MCF 10A (cell line): ENCODE measurements at regions of chr5 and their contacts with region 1.

Region 1: GRCh38 chr5:167653645-167654106 is 637.8 kb upstream of the WWC1 start:
- DNase-seq: peak; percentile 69
- H3K4me3 Mint-ChIP-seq: no peak overlapping the region
- H3K27ac Mint-ChIP-seq: peak overlapping the region; percentile 20
- H3K4me1 Mint-ChIP-seq: peaks cover 27% of the 10 kb centered on the region
- H3K27me3 Mint-ChIP-seq: no peaks in the 10 kb centered on the region
- CTCF ChIP-seq: no peak

Region 2: DNA sequence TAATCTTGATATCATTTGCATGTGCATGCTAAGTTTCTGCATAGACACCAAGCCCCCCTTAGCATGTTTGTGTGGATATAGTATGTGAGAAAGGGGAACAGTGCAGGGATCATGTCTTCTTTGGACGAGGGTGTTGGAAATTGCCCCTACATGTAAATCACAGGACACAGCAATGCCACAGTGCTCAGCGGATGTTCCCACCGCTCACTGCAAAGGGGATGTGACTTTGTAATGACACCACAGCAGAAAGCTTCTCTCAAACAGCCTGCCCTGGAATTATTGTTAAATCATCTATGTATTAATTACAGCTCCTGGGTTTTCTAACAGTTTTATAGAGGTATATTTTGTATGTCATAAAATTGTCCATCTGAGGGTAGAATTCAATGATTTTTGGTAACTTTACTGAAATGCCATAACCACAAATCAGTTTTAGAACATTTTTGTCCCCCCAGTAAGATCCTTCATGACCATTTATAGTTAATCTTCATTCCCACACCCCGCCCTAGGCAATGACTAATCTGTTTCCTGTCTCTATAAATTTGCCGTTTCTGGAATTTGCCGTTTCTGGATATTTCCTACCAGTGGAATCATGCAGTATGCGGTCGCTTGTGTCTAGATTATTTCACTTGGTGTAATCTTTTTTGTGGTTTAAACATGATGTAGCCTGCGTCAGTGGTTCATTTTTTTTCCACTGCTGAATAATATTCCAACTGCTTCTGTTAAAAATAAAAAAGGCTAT is 10.7 kb before region 1 on chr5:
- CTCF ChIA-PET with region 1: interaction called, 4 read pairs
- POLR2A ChIA-PET with region 1: interaction called, 27 read pairs
- intact Hi-C with region 1: no loop called
- DNase-seq: peak; percentile 86
- H3K4me3 Mint-ChIP-seq: no peak overlapping the region
- H3K27ac Mint-ChIP-seq: peak overlapping the region; percentile 70
- H3K4me1 Mint-ChIP-seq: peaks cover 43% of the 10 kb centered on the region
- H3K27me3 Mint-ChIP-seq: no peaks in the 10 kb centered on the region
- CTCF ChIP-seq: no peak

Region 3: DNA sequence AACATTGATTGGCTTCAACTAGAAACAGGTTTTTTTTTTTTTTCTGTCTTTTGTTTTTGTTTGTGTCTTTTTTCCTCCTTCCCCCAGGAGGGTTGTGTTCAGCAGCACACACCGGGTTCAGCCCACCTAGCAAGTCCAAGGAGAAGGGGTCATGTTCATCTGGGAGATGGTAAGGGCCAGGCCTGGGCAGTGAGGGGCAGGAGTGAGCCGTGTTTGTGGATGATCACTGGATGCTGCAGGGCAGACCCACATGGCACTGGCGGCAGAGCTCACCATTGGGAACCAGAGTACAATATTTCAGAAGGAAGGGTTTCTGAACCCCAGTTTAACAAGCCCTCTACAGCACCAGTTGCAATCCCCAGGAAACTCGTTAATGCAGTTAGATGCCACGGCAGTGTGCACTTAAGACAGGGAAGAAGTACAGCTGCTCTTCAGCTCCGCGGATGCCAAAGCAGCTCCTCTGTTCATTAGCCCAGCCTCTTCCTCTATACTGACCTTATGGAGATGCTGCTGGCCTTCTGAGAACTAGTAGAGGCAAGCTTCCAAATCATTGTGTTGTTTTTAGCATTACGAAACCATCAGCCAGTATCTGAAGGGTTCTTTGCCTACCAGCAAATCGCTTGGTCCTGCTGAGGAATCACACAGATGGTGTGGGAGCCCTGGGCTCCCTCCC is 129.6 kb after region 1 on chr5:
- CTCF ChIA-PET with region 1: no interaction called
- POLR2A ChIA-PET with region 1: no interaction called
- intact Hi-C with region 1: no loop called
- DNase-seq: peak; percentile 27
- H3K4me3 Mint-ChIP-seq: no peak overlapping the region
- H3K27ac Mint-ChIP-seq: no peak overlapping the region
- H3K4me1 Mint-ChIP-seq: peaks cover 7% of the 10 kb centered on the region
- H3K27me3 Mint-ChIP-seq: no peaks in the 10 kb centered on the region
- CTCF ChIP-seq: no peak